ENCODE measurements at regions of chr15 and their contacts with region 1.

Region 1: DNA sequence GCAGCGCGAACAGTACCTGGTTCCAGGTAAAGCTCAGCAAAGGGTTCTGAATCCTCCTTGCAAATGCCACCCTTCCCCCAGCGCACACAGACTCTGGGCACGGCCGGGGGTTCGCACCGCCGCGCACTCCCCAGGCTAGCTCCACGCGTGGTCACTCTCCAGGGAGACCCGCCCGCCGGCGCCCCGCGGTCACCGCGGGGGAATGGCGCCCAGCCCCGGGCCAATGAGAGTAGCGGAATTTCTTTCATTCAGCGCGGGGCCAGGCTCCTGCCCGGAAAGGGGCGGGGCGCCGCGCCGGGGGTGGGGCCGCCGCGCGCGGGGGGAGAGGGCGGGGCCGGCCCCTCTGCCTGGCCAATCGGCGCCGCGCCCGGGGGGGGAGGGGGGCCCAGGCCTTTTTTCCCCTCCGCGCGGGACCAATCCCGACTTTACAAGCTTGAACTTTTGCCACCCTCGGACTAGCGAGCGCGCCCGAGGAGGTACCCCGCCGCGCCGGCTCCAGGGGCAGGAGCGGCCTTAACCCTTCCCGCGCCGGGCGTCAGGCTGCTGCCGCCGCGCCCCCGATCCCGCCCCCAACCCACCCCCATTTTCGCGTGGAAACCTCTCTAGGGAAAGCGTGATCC is 1.1 kb upstream of the SMAD6 start:
- DNase-seq: peak; percentile 97
- H3K4me3 ChIP-seq: peak overlapping the region; percentile 65 to 76
- H3K27ac ChIP-seq: peak overlapping the region; percentile 59 to 77
- H3K4me1 ChIP-seq: peaks cover 4% of the 10 kb centered on the region
- H3K27me3 ChIP-seq: no peaks in the 10 kb centered on the region
- CTCF ChIP-seq: no peak
- POLR2A ChIP-seq: no peak

Region 2: DNA sequence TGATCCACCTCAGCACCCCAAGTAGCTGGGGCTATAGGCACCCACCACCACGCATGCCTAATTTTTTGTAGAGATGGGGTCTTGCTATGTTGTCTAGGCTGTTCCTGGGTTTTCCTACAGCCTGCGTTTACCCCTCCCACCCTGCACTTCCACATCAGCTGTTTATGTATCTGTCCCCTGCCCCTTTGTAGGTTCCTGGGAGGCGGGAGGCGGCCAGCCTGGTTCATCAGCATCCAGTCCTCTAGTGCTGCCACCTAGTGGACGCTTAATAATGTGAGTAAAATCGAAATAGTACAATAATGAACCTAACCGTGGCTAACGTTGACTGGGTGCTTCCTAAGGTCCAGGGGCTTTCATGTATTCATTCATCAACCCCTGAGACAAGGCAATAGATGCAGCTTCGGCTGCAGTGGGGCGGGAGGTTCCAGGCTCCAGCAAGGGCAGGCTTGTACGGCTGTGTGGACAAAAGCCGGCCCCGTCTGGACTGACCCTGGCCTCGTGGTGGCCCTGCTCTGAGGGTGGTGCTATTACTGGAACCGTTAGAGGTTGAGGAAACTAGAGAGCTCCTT is 133.9 kb before region 1 on chr15:
- intact Hi-C with region 1: no loop called
- DNase-seq: peak; percentile 76
- H3K4me3 ChIP-seq: no peak overlapping the region
- H3K27ac ChIP-seq: no peak overlapping the region
- H3K4me1 ChIP-seq: no peaks in the 10 kb centered on the region
- H3K27me3 ChIP-seq: no peaks in the 10 kb centered on the region
- CTCF ChIP-seq: peak; percentile 20 to 79 (median 49)
- POLR2A ChIP-seq: no peak

Region 3: GRCh38 chr15:66740802-66741201 is 39.9 kb after region 1 on chr15:
- intact Hi-C with region 1: no loop called
- DNase-seq: peak; percentile 73
- H3K4me3 ChIP-seq: no peak overlapping the region
- H3K27ac ChIP-seq: peak overlapping the region in 1 of 2 donors; percentile 7
- H3K4me1 ChIP-seq: peaks cover 16% of the 10 kb centered on the region
- H3K27me3 ChIP-seq: no peaks in the 10 kb centered on the region
- CTCF ChIP-seq: no peak
- POLR2A ChIP-seq: no peak

Region 4: DNA sequence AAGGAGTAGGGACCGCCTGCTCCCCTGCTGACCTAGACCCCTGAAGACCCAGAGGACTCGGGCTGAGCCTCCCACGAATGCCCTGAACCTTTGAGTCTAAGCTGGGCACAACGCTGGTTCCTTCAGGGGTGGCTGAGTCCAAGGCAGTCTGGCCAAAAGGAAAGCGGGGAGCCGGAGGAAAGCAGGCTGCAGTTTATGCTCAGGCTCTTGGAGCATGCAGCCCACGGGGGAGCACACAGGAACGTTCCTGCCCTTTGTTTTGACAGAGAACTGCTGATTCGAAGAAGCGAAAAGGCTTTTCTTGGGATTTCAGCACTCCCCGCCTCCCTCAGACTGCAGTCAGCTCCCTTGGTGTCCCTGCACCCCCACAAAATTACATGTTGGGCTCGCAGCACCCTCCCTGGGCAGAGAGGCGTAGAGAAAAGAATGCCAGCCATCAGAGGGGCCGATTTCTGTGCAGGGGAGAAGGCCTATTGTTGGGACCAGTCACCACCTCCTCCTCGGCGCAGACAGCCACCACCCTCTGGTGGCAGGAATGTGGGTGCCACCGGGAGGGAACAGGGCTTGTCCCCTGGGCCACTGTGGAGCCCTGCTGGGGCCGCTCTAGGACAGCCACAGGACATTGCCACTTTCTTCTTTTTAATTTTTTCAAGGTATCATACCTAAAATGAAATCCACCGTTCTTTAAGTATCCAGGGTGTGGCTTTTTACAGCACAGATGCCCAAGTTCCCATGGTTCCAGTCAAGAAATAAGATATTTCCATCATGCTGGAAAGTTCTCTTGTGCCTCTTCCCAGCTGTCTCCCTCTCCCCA is 73.3 kb after region 1 on chr15:
- intact Hi-C with region 1: loop called (anchors 10 kb)
- DNase-seq: peak; percentile 86
- H3K4me3 ChIP-seq: no peak overlapping the region
- H3K27ac ChIP-seq: peak overlapping the region; percentile 17 to 39
- H3K4me1 ChIP-seq: peaks cover 32% of the 10 kb centered on the region
- H3K27me3 ChIP-seq: no peaks in the 10 kb centered on the region
- CTCF ChIP-seq: peak; percentile 95 to 98 (median 97)
- POLR2A ChIP-seq: no peak

Region 5: DNA sequence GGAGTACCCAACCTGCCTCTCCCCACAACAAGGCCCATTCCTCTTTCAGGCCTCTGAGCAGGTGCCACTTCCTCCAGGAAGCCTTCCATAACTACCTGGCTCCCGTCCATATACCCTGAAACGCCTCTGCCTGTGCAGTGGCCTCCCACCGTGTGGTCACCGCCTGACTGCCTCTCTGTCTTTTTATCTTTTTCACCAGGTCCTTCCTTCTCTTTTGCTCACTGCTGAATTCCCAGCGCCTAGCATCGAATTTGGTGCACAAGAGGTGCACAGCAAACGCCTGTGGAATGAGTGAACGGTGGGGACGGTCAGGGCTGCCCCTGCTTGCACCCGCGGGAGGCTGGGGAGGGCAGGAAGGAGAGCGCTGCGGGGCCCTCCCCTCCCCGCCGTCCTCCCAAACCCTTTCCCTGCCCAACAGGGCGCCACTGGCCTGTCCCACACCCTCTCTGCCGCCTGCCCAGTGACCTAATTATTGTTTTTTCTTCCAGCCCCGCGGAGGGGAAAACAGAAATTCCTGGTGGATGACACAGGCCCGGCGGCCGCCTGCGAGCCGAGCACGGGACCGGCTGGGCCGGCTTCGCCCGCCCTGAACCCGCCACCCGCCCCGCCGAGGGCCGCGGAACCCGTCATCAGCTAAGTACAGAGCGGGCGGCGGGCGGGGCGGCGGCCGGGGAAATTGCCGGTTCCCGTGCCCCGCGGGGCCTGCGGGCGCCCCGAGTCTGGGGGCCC is 141.2 kb after region 1 on chr15:
- intact Hi-C with region 1: loop called (anchors 10 kb)
- DNase-seq: peak; percentile 78
- H3K4me3 ChIP-seq: peak overlapping the region; percentile 44 to 60
- H3K27ac ChIP-seq: peak overlapping the region; percentile 69 to 92
- H3K4me1 ChIP-seq: peaks cover 7% of the 10 kb centered on the region
- H3K27me3 ChIP-seq: no peaks in the 10 kb centered on the region
- CTCF ChIP-seq: no peak
- POLR2A ChIP-seq: no peak